Right ventricle myocardium inferior (tissue), 1 donor: ENCODE measurements at regions of chr7 and their contacts with region 1.

Region 1: DNA sequence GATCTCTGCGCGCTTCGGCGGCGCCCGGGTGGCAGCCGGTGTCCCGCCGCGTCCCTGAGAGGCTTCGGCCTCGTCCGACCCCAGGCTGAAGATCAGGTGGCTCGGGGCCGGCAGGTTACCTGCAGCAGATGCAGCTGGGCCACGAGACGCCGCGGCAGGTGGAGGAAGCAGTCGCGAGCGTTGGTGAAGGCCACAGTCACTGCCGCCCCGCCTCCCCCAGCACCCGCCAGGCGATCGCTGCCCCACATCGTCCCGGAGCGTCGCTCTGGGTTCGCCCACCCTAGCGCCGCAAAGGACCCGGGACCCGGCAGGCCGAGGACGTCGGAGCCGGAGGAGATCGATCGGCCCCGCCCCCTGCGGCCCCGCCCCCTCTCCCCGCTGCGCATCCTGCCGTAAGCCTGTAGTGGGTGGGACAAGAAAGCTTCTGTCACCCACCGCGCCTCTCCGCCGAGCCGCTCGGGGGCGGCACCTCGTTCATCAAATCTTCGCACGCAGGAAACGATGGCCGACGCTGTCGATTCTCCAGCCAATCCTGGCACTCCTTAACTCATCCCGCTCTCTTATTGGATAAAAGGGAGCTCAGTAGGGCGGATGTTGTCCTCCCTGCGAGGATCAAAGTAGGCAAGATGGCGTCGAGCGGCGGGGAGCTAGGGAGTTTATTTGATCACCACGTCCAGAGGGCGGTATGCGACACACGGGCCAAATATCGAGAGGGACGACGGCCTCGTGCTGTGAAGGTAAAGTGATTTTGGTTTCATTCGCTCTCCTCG is at the starts of genes PEX1 and RBM48:
- DNase-seq: peak; percentile 96
- ATAC-seq: peak; percentile 99
- total RNA-seq, gene PEX1: 10.4 TPM
- total RNA-seq, gene RBM48: 11.8 TPM

Region 2: GRCh38 chr7:92584996-92585395 is 56.6 kb after region 1 on chr7:
- intact Hi-C with region 1: loop called (anchors 5 kb)
- DNase-seq: no peak
- ATAC-seq: no peak

Region 3: DNA sequence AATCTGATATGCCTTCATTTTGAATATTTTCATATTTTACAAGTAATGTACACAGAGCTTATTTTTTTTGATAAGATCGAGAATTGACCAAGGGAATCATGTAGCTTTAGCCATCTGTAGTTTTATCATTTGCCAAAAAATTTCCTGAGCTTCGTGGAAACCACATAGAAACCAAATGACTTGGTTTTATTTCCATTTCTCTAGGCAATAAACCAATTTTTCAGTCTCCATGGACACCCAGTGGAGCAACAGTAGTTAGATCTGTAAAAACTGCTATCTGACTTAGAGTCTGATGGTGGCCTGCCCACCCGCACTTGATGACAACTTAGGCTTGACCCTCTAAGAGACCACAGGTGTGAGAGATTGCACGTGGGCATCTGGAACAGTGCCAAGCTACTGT is 435.8 kb after region 1 on chr7:
- intact Hi-C with region 1: no loop called
- DNase-seq: no peak
- ATAC-seq: no peak